ENCODE measurements at regions of chr17 and their contacts with region 1.

Region 1: GRCh38 chr17:4565209-4566141 is 5.1 kb upstream of the GGT6 start:
- DNase-seq: peak; percentile 71
- ATAC-seq: peak; percentile 95
- H3K4me3 ChIP-seq: no peak overlapping the region
- H3K27ac ChIP-seq: no peak overlapping the region
- H3K4me1 ChIP-seq: peaks cover 8% of the 10 kb centered on the region
- H3K27me3 ChIP-seq: no peaks in the 10 kb centered on the region
- CTCF ChIP-seq: peak; percentile 86

Region 2: DNA sequence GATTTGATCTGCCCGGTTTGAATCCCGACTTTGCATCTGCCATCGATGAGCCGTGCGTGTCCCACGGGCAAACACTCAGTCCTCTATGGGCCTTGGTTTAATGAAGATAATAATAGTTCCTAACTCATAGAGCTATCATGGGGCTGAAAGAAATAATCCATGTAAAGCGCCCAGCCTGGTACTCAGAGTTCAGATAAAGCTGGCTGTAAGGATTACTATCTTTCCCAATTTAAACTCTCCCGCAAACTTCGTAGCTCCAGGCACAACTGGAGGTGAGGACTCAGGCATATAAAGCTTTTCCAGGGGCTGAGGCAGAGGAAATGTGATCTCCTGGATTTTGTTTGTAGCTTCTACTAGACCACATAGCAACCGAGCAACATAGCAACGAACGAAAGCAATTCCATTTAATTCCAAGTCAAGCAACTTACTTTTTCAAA is 59.7 kb after region 1 on chr17:
- intact Hi-C with region 1: loop called (anchors 5 kb)
- DNase-seq: peak; percentile 6
- ATAC-seq: no peak
- H3K4me3 ChIP-seq: no peak overlapping the region
- H3K27ac ChIP-seq: no peak overlapping the region
- H3K4me1 ChIP-seq: peaks cover 14% of the 10 kb centered on the region
- H3K27me3 ChIP-seq: no peaks in the 10 kb centered on the region
- CTCF ChIP-seq: no peak

Measured in upper lobe of right lung (tissue), 1 donor.